ENCODE measurements at regions of chr13 and their contacts with region 1.

Region 1: DNA sequence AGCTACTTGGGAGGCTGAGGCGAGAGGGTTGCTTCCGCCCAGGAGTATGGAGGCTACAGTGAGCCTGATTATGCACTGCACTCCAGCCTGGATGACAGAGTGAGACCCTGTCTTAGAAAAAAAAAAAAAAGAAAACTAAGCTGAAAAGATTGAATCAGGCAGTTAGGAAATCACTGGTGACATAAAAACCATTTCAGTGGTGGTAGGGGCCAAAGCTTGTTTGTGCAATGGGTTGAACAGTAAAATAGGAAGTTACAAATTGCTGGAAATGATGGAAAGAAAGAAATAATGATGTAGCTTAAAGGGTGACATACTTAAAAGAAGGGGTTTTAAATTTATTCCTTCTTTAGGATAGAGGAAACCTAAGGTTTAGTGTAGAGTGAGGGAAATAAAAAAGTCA is 4.8 kb upstream of the OXGR1 start:
- DNase-seq: no peak
- H3K4me3 ChIP-seq: no peak overlapping the region
- H3K27ac ChIP-seq: no peak overlapping the region
- H3K4me1 ChIP-seq: no peaks in the 10 kb centered on the region
- H3K27me3 ChIP-seq: peaks cover 0 to under 1% of the 10 kb centered on the region in 2 donors
- CTCF ChIP-seq: no peak
- POLR2A ChIP-seq: no peak

Region 2: GRCh38 chr13:97011446-97012131 is 12.5 kb after region 1 on chr13:
- intact Hi-C with region 1: loop called (anchors 2 kb)
- DNase-seq: no peak
- H3K4me3 ChIP-seq: no peak overlapping the region
- H3K27ac ChIP-seq: no peak overlapping the region
- H3K4me1 ChIP-seq: no peaks in the 10 kb centered on the region
- H3K27me3 ChIP-seq: no peaks in the 10 kb centered on the region
- CTCF ChIP-seq: no peak
- POLR2A ChIP-seq: no peak